ENCODE measurements at regions of chr15 and their contacts with region 1.

Region 1: DNA sequence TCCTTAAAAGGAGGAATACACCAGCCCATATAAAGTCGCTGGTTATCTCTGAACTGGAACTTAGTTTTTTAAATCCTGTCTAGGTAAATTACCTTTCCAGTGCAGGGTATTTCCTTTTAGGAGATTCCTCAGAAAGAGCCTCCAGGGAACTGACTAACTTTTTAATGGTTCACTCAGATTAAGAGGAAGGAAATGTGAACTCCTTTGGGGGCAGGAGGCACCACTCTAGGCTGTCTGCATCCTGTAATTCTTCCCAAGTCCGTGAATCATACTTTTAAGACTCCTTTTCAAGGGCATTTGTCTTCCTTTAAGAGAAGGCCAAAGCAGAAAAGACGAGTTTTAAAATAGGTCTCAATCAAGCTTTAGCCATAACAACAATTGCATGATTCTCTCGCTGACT is 871.2 kb upstream of the NR2F2 start:
- DNase-seq: no peak

Region 2: DNA sequence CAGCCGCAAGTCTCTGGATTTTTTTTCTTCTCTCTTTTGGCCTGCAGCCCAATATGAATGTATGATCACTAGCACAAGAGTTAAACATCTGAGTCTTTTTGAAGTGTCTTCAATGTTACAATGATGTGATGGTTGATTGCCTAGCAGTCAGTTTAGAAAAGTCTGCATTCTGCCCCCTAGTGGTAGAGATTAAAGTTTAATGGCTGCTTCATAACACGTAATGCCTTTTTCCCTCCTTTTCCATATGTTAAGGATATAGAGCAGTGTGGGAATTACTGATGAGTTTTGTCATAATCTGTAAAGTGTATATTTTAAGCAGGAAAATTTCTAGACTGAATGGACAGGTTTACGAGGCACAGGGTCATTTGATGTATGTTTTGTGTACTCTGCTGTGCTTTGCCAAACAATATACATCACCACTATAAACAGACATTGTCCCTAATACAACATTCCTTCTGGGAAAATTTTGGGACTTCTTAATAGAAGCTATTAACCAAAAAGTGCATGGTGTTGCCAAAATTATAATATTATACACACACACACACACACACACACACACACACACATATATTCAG is 167.3 kb before region 1 on chr15:
- intact Hi-C with region 1: loop called (anchors 10 kb)
- DNase-seq: no peak